Posterior cingulate gyrus (tissue), 11 donors: ENCODE measurements at regions of chr13 and their contacts with region 1.

Region 1: DNA sequence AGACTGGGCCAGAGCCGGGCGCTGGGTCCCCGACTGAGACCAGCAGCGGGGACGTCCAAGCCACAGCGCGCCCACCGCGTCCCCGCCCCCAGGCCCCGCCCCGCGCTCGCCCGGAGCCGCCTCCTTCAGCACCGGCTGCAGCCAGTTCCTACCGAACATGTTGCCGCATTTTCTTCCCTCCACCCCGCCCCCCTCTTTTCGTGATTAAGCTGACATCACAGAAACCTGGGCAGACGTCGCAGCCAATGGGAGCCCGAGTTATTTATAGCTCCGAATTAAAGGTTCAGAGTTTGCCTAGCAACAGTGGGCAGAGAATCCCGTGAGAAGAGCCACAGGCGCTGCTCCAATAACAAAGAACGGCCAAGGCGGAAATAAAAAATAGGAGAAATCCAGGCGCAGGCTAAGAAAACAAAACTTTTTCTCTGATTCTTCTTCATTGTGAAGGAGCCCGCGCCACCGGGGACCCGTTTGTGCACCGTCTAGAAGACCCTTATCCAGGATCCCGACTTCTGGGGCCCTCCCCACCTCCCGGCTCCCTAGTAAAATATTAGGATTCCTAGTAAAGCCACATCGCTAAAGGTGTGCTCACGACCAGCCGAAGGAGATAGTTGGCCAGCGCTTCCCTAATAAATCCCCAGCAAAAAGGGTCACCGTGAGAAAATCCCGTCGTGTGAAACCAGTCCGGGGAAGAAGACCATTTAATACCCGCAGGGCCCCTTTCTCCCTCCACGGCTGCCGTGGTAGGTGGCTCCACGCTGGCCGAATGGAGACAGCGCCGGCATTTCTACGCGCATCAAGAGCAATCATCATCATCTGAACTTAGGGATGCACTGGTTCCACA is 61.7 kb downstream of the SERP2 start:
- DNase-seq: peak; percentile 84 to 97 (median 90)

Region 2: GRCh38 chr13:43905435-43906031 is 529.8 kb before region 1 on chr13:
- intact Hi-C with region 1: loop called (anchors 2 kb)
- DNase-seq: peak in 1 of 10 donors; percentile 22

Region 3: DNA sequence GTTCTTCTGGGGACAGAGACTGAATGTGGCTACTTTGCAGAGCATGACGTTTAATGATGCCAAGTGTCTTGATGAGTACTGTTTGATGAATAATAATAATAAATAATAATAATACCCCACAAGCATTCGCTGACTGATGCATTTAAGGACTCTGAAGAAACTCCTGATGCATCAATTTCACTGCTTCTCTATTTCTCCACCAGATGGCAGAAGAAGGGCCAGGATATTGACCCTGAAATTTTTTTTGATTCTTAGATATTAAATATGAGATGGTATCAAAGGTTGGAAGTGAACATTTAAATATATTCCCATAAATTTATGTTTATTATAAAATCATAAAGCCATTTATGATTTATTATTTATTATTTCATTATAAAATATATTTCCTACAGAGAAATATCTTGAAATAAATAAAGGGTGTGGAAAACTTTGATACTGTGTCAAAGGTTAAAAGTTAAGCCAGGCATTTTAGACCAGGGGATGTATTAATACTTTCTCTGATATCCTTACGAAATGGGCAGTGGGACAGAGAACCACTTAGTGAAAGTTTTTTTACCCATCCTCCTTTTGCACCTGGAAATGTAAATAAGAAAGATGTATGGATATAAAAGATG is 384.8 kb before region 1 on chr13:
- intact Hi-C with region 1: loop called (anchors 1 kb)
- DNase-seq: no peak

Region 4: DNA sequence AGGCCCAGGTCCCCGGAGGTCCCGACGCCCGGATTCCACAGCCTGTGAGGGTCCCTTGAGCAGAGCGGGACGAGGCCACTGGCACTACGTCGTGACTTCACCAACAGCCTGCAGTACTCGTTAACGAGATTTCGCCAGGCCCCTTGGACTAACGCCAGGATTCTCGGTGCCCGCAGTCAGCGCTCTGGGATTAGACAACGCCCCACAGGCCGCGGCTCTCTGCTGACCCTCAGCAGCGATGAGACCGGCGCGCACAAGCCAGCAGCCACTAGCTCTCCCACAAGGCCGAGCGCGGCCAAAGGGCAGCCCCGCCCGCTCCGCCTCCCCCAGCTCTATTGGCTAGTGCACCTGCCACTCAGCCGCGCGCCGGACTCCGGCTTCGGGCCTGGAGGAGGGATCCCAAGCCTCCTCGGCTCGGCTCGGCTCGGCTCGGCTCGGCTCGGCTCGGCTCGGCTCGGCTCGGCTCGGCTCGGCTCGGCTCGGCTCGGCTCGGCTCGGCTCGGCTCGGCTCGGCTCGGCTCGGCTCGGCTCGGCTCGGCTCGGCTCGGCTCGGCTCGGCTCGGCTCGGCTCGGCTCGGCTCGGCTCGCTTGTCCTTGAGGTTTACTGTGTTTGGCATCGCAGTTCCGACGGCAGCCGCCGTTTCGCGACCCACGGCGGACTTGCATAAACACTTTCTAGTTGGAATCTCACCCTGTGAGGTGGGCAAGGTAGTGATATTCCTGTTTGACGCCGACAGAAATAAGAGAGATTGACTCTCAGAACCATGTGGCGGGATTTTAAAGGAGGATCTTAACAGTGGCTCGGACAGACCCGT is 293.4 kb before region 1 on chr13:
- intact Hi-C with region 1: loop called (anchors 5 kb)
- DNase-seq: peak; percentile 97 to 100 (median 98)

Region 5: GRCh38 chr13:44218501-44219240 is 216.7 kb before region 1 on chr13:
- intact Hi-C with region 1: loop called (anchors 10 kb)
- DNase-seq: peak in 1 of 10 donors; percentile 33

Region 6: DNA sequence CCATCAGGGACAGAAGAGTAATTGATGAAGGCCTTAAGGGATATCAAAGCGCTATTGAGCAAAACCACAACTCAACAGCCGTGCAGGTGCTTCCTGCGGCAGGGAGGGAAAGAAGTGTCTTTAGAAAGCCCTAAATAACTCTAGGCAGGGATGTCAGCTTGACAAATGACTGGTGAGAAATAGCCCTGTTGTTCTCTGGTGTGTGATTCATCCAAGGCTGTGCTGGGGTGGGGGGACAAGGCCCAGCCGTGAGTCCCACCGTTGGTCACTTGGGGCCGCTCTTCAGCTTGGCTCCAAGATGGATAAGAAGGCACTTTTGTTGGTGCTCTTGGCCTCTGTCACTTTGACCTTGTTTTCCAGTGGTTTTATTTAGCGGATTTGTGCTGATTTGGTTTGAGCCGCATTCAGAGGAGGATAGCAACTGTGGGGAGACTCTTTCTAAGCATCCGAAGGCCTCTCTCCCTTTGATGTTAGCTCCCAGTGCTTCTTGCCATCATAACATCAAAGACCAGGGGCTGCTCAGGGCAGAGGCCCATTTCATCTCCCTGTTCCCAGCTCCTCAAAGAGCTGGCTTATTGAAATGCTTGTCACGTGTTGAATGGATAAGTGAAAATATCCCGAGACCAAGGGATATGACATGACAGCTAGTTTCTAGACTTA is 192.0 kb before region 1 on chr13:
- intact Hi-C with region 1: loop called (anchors 2 kb)
- DNase-seq: peak in 6 of 10 donors; percentile 45 to 94 (median 67)

Region 7: GRCh38 chr13:44379885-44380284 is 55.5 kb before region 1 on chr13:
- intact Hi-C with region 1: loop called (anchors 5 kb)
- DNase-seq: no peak

Region 8: DNA sequence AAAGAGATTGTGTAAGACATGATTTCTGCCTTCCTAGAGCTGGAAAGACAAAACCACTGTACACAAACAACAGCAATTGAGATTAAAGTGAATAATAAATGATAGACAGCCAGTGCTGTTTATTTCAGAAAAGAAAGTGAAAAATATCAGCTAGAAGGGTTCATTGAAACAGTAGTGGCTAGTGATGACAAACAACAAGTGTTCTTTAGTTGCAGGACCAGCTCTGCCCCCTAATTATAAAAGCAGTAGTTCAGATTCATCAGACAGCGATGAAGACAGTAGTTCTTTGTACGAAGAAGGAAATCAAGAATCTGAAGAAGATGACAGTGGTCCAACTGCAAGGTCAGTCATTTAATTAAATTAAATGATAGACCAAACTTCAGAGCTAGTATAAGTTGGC is 568.7 kb after region 1 on chr13:
- intact Hi-C with region 1: no loop called
- DNase-seq: no peak

Region 9: DNA sequence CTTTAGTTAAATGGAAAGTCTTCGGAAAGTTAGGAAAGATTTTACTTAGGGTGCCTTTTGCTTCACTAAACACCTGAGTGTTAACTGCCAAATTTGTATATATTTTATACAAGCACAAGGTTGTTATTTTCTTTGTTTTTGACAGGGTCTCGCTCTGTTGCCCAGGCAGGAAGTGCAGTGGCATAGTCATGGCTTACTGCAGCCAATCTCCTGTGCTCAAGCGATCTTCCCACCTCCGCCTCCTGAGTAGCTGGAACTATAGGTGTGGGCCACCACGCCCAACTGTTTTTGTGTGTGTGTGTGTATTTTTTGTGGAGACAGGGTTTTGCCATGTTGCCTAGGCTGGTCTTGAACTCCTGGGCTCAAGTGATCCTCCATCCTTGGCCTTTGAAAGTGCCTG is 749.3 kb after region 1 on chr13:
- intact Hi-C with region 1: no loop called
- DNase-seq: no peak